ENCODE measurements at regions of chr15 and their contacts with region 1.

Region 1: GRCh38 chr15:101088788-101089583 is 162.9 kb downstream of the CHSY1 start:
- DNase-seq: peak; percentile 94
- H3K4me3 Mint-ChIP-seq: peak overlapping the region; percentile 36
- H3K27ac Mint-ChIP-seq: no peak overlapping the region
- H3K4me1 Mint-ChIP-seq: no peaks in the 10 kb centered on the region
- H3K27me3 Mint-ChIP-seq: peaks cover 20% of the 10 kb centered on the region
- CTCF ChIP-seq: peak; percentile 99

Region 2: GRCh38 chr15:100987143-100987542 is 101.8 kb before region 1 on chr15:
- CTCF ChIA-PET with region 1: no interaction called
- intact Hi-C with region 1: no loop called
- DNase-seq: no peak
- H3K4me3 Mint-ChIP-seq: no peak overlapping the region
- H3K27ac Mint-ChIP-seq: no peak overlapping the region
- H3K4me1 Mint-ChIP-seq: peaks cover 20% of the 10 kb centered on the region
- H3K27me3 Mint-ChIP-seq: no peaks in the 10 kb centered on the region
- CTCF ChIP-seq: no peak

Region 3: GRCh38 chr15:101014921-101015841 is 73.8 kb before region 1 on chr15:
- CTCF ChIA-PET with region 1: no interaction called
- intact Hi-C with region 1: loop called (anchors 10 kb)
- DNase-seq: peak; percentile 86
- H3K4me3 Mint-ChIP-seq: no peak overlapping the region
- H3K27ac Mint-ChIP-seq: no peak overlapping the region
- H3K4me1 Mint-ChIP-seq: no peaks in the 10 kb centered on the region
- H3K27me3 Mint-ChIP-seq: no peaks in the 10 kb centered on the region
- CTCF ChIP-seq: peak; percentile 84

Region 4: DNA sequence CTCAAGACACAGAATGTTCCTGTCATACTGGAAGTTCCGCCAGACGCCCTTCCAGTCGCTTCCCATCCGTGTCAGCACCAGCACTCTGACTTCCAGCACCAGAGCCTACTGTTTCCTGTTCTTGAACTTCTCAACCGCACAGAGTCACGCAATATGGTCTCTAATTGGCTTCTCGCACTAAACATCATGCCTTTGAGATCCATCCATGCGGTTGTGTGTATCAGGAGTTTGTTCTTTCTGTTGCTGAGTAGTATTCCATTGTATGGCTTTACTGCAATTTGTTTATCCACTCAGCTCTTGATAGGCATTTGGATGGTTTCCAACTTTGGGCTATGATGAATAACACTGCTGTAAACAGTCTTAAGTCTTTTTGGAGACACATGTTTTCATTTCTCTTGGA is 57.8 kb before region 1 on chr15:
- CTCF ChIA-PET with region 1: no interaction called
- intact Hi-C with region 1: no loop called
- DNase-seq: no peak
- H3K4me3 Mint-ChIP-seq: no peak overlapping the region
- H3K27ac Mint-ChIP-seq: no peak overlapping the region
- H3K4me1 Mint-ChIP-seq: no peaks in the 10 kb centered on the region
- H3K27me3 Mint-ChIP-seq: no peaks in the 10 kb centered on the region
- CTCF ChIP-seq: no peak

Region 5: GRCh38 chr15:101068961-101069653 is 19.9 kb before region 1 on chr15:
- CTCF ChIA-PET with region 1: no interaction called
- intact Hi-C with region 1: no loop called
- DNase-seq: no peak
- H3K4me3 Mint-ChIP-seq: no peak overlapping the region
- H3K27ac Mint-ChIP-seq: no peak overlapping the region
- H3K4me1 Mint-ChIP-seq: peaks cover 13% of the 10 kb centered on the region
- H3K27me3 Mint-ChIP-seq: no peaks in the 10 kb centered on the region
- CTCF ChIP-seq: no peak

Measured in Calu3 (cell line).